PC-9 (cell line): ENCODE measurements at regions of chr12 and their contacts with region 1.

Region 1: DNA sequence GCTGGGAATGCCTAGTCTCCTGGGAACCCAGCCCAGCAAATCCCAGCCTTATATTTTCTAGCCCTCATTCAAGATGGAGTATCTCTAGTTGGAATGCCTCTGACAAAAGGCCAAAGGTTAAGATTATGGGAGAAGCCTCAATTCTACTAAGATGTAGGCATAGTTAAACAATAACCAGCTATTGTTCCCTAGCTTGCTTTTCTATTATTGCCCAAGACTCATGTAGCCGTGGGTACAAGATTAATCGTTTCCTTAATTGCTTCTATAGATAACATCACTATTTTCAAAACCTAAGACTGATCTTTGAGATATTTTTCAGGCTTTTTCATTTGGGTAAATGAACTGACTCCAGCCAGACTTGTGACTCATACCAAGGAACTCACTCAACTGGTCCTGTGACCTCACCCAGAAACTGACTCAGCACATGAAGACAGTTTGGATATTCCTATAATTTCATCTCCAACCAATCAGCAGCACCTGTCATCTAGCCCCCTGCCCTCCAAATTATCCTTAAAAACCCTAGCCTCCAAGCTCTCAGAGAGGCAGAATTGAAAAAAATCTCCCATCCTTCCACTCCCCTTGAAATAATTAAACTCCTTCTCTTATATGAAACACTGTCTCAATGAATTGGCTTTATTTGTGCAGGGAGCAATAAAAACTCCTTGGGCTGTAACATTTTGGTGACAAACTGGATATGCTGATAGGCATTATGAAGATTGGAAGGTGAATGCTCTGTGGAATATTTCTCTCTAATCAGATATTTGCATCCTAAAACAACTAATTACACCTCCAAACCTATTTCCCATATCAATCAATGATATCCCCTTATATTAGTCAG is 589.0 kb downstream of the C12orf50 start:
- DNase-seq: peak; percentile 59 to 95
- H3K4me3 ChIP-seq: no peak overlapping the region
- H3K27ac ChIP-seq: peak overlapping the region; percentile 82
- H3K4me1 ChIP-seq: peaks cover 23% of the 10 kb centered on the region
- H3K27me3 ChIP-seq: no peaks in the 10 kb centered on the region
- CTCF ChIP-seq: no peak

Region 2: DNA sequence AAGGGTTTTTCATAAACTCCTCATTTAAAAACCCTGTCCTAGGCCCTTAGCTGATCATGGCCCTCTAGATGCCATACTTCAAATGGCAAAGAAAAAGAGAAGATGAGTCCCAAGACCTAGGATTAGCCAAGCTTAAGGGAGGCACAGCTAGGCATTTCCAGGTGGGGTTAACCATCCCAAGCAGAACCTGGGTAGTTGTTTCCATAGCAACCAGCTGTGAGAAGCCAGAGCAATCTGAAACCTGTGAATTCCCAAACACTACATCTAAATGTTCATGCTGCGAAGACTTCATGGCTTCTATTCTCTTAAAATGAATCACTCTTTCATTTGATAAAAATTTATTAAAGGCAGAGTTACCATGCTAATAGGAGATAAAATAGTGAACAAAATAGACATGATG is 216.1 kb after region 1 on chr12:
- CTCF ChIA-PET with region 1: no interaction called
- POLR2A ChIA-PET with region 1: no interaction called
- intact Hi-C with region 1: loop called (anchors 10 kb)
- DNase-seq: no peak
- H3K4me3 ChIP-seq: no peak overlapping the region
- H3K27ac ChIP-seq: no peak overlapping the region
- H3K4me1 ChIP-seq: no peaks in the 10 kb centered on the region
- H3K27me3 ChIP-seq: no peaks in the 10 kb centered on the region
- CTCF ChIP-seq: no peak

Region 3: GRCh38 chr12:87827638-87828264 is 387.5 kb after region 1 on chr12:
- CTCF ChIA-PET with region 1: no interaction called
- POLR2A ChIA-PET with region 1: no interaction called
- intact Hi-C with region 1: loop called (anchors 10 kb)
- DNase-seq: peak; percentile 1 to 73
- H3K4me3 ChIP-seq: no peak overlapping the region
- H3K27ac ChIP-seq: peak overlapping the region; percentile 55
- H3K4me1 ChIP-seq: peaks cover 13% of the 10 kb centered on the region
- H3K27me3 ChIP-seq: no peaks in the 10 kb centered on the region
- CTCF ChIP-seq: no peak